CD4-positive, alpha-beta T cell (primary cell): ENCODE measurements at regions of chr6 and their contacts with region 1.

Region 1: GRCh38 chr6:157054531-157054979 is 268.8 kb downstream of the TMEM242 start:
- DNase-seq: peak in 6 of 14 experiments; percentile 5 to 90 (median 48)
- ATAC-seq: peak; percentile 93
- H3K4me3 ChIP-seq: no peak overlapping the region
- H3K4me3 Mint-ChIP-seq: peak overlapping the region; percentile 72
- H3K27ac ChIP-seq: peak overlapping the region; percentile 62 to 70
- H3K27ac Mint-ChIP-seq: peak overlapping the region; percentile 92
- H3K4me1 ChIP-seq: peaks cover 32% of the 10 kb centered on the region
- H3K4me1 Mint-ChIP-seq: peaks cover 55% of the 10 kb centered on the region
- H3K27me3 ChIP-seq: no peaks in the 10 kb centered on the region
- H3K27me3 Mint-ChIP-seq: no peaks in the 10 kb centered on the region
- CTCF ChIP-seq: no peak

Region 2: GRCh38 chr6:156832231-156832647 is 222.3 kb before region 1 on chr6:
- CTCF ChIA-PET with region 1: no interaction called
- POLR2A ChIA-PET with region 1: no interaction called
- intact Hi-C with region 1: no loop called
- DNase-seq: no peak
- ATAC-seq: no peak
- H3K4me3 ChIP-seq: no peak overlapping the region
- H3K4me3 Mint-ChIP-seq: no peak overlapping the region
- H3K27ac ChIP-seq: no peak overlapping the region
- H3K27ac Mint-ChIP-seq: no peak overlapping the region
- H3K4me1 ChIP-seq: peaks cover 14% of the 10 kb centered on the region
- H3K4me1 Mint-ChIP-seq: peaks cover 72% of the 10 kb centered on the region
- H3K27me3 ChIP-seq: no peaks in the 10 kb centered on the region
- H3K27me3 Mint-ChIP-seq: no peaks in the 10 kb centered on the region
- CTCF ChIP-seq: no peak

Region 3: DNA sequence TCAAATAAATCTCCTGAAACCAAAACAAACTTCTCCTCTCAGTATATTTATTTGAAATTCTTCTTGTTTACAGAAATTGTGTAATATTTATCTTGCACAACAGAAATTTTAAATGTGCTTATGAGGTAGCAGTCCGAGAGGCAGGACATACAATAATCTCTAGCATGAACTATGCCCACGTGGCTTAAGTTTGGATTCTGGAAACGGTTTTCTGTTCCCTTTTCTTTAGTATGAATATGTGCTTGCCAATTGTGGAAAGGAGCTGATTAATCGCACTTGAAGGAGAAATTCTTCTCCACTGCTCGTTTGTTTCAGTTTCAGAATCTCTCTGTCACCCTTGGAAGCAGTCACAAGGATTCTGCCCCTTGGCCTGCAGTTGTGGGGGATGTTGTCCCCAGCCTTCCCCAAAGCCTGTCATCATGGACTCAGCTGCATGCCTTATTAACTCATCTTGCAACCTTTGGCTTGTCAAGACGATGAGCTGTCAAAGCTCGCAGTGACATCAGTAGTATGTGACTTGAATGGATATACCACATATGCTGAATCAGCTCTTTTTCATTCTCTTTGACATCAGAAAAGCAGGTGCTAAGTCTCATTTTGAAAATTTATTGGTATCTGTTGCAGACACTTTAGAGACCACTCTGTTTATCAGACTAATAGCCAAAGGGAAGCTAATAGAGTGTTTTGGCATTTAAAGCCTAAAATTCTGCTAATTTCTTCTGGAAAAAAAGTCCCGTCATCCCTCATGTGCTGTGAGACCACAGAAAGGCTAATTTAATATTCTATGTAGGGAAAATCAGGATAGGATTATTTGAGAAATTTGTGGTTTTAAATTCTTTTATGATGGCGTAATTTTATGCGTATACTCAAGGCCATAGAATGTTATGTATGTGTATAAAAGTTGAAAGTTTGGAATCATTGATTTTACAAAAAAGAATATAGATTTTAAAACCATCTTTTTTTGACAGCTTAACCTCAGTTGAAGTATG is 90.5 kb before region 1 on chr6:
- CTCF ChIA-PET with region 1: no interaction called
- POLR2A ChIA-PET with region 1: no interaction called
- intact Hi-C with region 1: no loop called
- DNase-seq: peak in 4 of 14 experiments; percentile 15 to 57 (median 36)
- ATAC-seq: peak; percentile 17
- H3K4me3 ChIP-seq: peak overlapping the region; percentile 12
- H3K4me3 Mint-ChIP-seq: peak overlapping the region; percentile 6
- H3K27ac ChIP-seq: no peak overlapping the region
- H3K27ac Mint-ChIP-seq: no peak overlapping the region
- H3K4me1 ChIP-seq: peaks cover 18% of the 10 kb centered on the region
- H3K4me1 Mint-ChIP-seq: peaks cover 62% of the 10 kb centered on the region
- H3K27me3 ChIP-seq: no peaks in the 10 kb centered on the region
- H3K27me3 Mint-ChIP-seq: no peaks in the 10 kb centered on the region
- CTCF ChIP-seq: no peak

Region 4: DNA sequence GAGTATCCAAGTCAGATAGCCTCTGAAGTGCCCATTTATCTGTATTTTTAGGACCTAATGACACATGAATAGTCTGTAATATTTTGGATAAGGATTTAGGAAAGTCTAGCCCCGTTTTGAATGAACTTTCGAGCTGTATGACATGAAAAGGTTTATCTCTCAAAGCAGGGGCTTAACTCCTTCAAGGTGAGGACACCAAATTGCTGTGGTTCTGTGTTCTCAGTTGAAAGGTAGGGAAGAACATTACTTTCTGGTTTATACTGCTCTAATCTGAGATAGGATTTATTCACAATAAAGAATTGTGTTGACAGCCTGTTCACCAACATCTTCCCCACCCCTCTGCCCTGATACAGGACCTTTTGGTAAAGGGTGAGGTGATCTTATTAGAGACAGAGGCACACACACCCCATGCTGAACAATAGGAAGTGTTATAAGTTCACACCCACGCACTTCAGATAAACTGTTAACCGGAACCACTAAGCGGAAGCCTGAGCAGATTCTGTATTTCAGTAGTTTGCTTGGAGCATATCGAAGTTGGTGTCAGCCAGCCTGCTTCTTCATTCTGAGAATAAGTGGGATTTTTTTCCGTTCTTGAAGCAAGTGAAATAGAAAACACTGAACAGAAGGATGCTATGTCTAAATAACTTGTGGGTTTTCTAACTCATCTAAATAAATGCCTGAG is 45.5 kb after region 1 on chr6:
- CTCF ChIA-PET with region 1: no interaction called
- POLR2A ChIA-PET with region 1: interaction called, 3 read pairs
- intact Hi-C with region 1: loop called in 1 of 2 experiments (anchors 5 kb)
- DNase-seq: peak in 12 of 14 experiments; percentile 1 to 84 (median 16)
- ATAC-seq: peak; percentile 97
- H3K4me3 ChIP-seq: no peak overlapping the region
- H3K4me3 Mint-ChIP-seq: peak overlapping the region; percentile 63
- H3K27ac ChIP-seq: peak overlapping the region; percentile 38 to 48
- H3K27ac Mint-ChIP-seq: peak overlapping the region; percentile 95
- H3K4me1 ChIP-seq: peaks cover 24% of the 10 kb centered on the region
- H3K4me1 Mint-ChIP-seq: peaks cover 86% of the 10 kb centered on the region
- H3K27me3 ChIP-seq: no peaks in the 10 kb centered on the region
- H3K27me3 Mint-ChIP-seq: no peaks in the 10 kb centered on the region
- CTCF ChIP-seq: no peak

Region 5: DNA sequence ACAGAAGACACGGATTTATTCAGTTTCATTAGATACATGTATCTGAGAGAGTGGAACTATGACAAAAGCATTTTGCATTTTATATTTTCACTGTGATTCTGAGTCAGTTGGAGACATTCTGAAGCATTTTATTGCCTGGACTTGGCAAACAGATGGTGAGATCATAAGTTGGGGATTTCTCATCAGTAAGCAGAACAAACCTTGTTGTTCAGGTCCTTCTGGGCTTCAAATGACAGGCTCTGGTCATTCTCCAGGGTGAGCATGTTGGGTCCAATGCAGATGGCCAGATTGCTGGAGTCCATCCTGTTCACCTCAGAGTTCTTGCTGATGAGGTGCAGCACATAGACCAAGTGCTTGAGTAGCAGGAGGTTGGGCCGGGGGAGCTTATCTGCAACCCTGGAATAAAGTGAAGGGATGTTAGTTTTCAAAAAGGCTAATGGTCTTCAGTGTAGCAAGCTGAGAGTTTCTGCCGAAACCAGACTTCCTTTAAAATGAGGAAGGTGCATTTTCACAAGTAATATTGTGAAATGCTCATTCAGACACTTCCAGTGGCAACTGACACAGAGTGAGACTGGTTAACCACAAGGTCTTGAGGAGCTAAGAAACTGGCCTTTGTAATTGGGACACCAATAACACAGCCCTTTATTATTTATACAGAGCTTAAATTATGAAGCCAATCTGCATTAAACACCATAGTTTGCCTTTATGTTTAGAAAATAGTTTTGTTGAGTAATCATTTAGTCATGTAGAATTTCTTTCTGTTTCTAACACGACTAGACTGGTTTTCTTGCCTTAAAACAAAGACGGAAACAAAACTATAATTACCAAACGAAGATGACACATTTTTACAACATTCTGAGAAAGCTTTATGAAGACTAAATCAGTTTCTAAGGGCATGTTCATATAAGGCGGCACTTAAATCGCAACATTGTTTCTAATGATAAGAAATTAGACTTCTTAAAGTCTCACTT is 1984.6 kb after region 1 on chr6:
- CTCF ChIA-PET with region 1: no interaction called
- POLR2A ChIA-PET with region 1: no interaction called
- intact Hi-C with region 1: no loop called
- DNase-seq: peak in 3 of 14 experiments; percentile 66 to 79 (median 74)
- ATAC-seq: no peak
- H3K4me3 ChIP-seq: peak overlapping the region; percentile 88
- H3K4me3 Mint-ChIP-seq: peak overlapping the region; percentile 88
- H3K27ac ChIP-seq: peak overlapping the region; percentile 81 to 91
- H3K27ac Mint-ChIP-seq: peak overlapping the region; percentile 91
- H3K4me1 ChIP-seq: peaks cover 62% of the 10 kb centered on the region
- H3K4me1 Mint-ChIP-seq: peaks cover 74% of the 10 kb centered on the region
- H3K27me3 ChIP-seq: no peaks in the 10 kb centered on the region
- H3K27me3 Mint-ChIP-seq: no peaks in the 10 kb centered on the region
- CTCF ChIP-seq: no peak